Upper lobe of right lung (tissue), 1 donor: ENCODE measurements at regions of chr10 and their contacts with region 1.

Region 1: GRCh38 chr10:21078410-21079329 is 181.6 kb upstream of the NEBL start:
- DNase-seq: no peak
- ATAC-seq: peak; percentile 94
- H3K4me3 ChIP-seq: no peak overlapping the region
- H3K27ac ChIP-seq: no peak overlapping the region
- H3K4me1 ChIP-seq: no peaks in the 10 kb centered on the region
- H3K27me3 ChIP-seq: no peaks in the 10 kb centered on the region
- CTCF ChIP-seq: peak; percentile 78

Region 2: DNA sequence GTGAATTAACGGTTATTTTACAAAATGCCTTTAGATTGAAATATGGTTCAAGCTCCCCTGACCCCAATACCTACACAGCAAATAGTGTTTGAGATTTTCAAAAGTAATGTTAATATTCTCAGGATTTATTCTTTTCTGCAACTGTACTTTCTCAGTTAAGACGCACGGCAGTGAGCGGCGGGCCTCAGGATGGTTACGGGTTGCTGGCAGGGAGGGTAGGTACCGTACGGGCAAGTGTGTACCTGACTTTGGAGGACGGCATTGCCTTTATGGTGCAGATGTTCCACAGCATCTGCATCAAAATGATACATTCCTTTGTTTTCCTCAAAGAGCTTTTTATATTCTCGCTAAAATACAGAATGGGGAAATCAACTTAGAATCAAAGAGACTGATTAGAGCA is 226.4 kb before region 1 on chr10:
- intact Hi-C with region 1: no loop called
- DNase-seq: no peak
- ATAC-seq: no peak
- H3K4me3 ChIP-seq: no peak overlapping the region
- H3K27ac ChIP-seq: no peak overlapping the region
- H3K4me1 ChIP-seq: no peaks in the 10 kb centered on the region
- H3K27me3 ChIP-seq: no peaks in the 10 kb centered on the region
- CTCF ChIP-seq: no peak

Region 3: GRCh38 chr10:21265621-21266020 is 187.0 kb after region 1 on chr10:
- intact Hi-C with region 1: loop called (anchors 5 kb)
- DNase-seq: no peak
- ATAC-seq: peak; percentile 28
- H3K4me3 ChIP-seq: no peak overlapping the region
- H3K27ac ChIP-seq: no peak overlapping the region
- H3K4me1 ChIP-seq: peaks cover 3% of the 10 kb centered on the region
- H3K27me3 ChIP-seq: no peaks in the 10 kb centered on the region
- CTCF ChIP-seq: no peak

Region 4: GRCh38 chr10:21499701-21500577 is 421.3 kb after region 1 on chr10:
- intact Hi-C with region 1: loop called (anchors 10 kb)
- DNase-seq: no peak
- ATAC-seq: no peak
- H3K4me3 ChIP-seq: peak overlapping the region; percentile 26
- H3K27ac ChIP-seq: no peak overlapping the region
- H3K4me1 ChIP-seq: peaks cover 19% of the 10 kb centered on the region
- H3K27me3 ChIP-seq: peaks cover 18% of the 10 kb centered on the region
- CTCF ChIP-seq: no peak